ENCODE measurements at regions of chr11 and their contacts with region 1.

Region 1: DNA sequence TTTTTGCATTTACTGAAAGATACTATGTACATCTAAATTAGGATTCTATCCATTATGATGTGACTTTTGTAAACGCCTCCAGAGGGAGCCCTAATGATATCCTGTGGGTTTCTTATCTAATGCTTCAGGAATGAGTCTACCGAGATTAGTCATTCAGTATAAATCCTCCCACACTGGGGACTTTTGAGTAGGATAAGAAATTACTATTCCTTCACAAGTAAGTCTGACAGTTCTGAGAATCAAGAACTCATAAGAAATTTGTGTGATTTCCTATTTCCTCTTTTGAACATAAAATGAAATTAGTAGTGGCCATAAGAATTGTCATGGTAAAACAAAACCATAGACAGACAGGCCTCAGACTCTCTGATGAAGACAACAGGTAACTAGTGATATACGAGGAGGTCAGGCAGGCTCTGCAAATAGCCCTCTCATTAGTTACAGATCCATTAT is 10.0 kb upstream of the OR5M1 start:
- DNase-seq: no peak
- ATAC-seq: peak in 1 of 8 donors; percentile 70
- H3K4me3 ChIP-seq: no peak overlapping the region
- H3K27ac ChIP-seq: no peak overlapping the region
- H3K4me1 ChIP-seq: no peaks in the 10 kb centered on the region
- H3K27me3 ChIP-seq: peaks cover 0 to 2% (median 0%) of the 10 kb centered on the region in 7 donors
- CTCF ChIP-seq: peak in 7 of 9 donors; percentile 29 to 60 (median 48)

Region 2: DNA sequence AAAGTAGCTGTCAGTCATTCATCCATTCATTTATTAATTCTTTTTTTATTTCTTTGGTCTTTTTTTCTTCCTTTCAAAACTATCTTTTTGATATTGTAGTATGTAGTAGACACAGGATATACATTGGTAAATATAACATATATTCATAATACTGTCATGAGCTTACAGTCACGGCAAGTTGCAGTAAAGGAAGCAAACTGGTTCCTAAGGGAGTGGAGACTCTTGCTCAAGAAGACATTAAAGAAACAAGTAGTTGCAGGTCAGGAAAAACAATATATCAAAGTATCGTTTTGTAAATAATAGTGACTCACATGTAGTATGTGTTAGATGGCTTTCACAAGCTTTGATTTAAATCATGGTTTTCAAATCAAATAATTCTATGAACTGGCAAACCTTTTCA is 46.3 kb after region 1 on chr11:
- intact Hi-C with region 1: loop called in 1 of 10 experiments (anchors 5 kb)
- DNase-seq: no peak
- ATAC-seq: no peak
- H3K4me3 ChIP-seq: no peak overlapping the region
- H3K27ac ChIP-seq: no peak overlapping the region
- H3K4me1 ChIP-seq: no peaks in the 10 kb centered on the region
- H3K27me3 ChIP-seq: no peaks in the 10 kb centered on the region
- CTCF ChIP-seq: no peak

Region 3: GRCh38 chr11:56776809-56777208 is 152.1 kb after region 1 on chr11:
- intact Hi-C with region 1: loop called in 6 of 10 experiments (anchors 5 to 10 kb)
- DNase-seq: no peak
- ATAC-seq: no peak
- H3K4me3 ChIP-seq: no peak overlapping the region
- H3K27ac ChIP-seq: no peak overlapping the region
- H3K4me1 ChIP-seq: no peaks in the 10 kb centered on the region
- H3K27me3 ChIP-seq: peaks cover 0 to 5% (median 0%) of the 10 kb centered on the region in 7 donors
- CTCF ChIP-seq: no peak

Region 4: DNA sequence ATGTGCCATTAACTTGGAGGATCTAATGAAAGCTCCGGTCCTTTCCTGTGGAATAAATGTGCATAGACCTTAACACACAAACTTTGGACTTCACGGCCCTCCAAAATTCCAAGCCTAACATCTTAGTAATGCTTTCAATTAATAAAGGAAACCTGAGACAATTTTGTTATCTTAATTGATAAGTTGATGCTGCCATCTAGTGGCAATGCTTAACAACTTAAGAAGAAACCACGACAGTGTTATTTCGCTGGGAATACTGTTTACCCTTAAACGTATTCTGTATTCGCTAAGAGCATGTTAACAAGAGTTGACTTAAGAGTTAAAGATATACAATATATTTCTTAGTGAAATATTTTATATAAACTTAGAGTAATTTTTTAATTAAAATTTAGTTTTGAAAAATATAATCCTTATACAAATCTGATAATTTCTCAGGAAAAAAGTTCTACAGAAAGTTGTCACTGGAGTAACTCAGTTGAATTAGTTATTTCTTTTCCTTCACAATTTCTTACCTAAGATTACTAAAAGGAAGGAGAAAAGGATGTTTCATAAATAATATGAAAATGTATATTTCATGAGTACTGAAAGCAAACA is 158.9 kb after region 1 on chr11:
- intact Hi-C with region 1: loop called in 6 of 10 experiments (anchors 5 to 10 kb)
- DNase-seq: no peak
- ATAC-seq: no peak
- H3K4me3 ChIP-seq: no peak overlapping the region
- H3K27ac ChIP-seq: no peak overlapping the region
- H3K4me1 ChIP-seq: no peaks in the 10 kb centered on the region
- H3K27me3 ChIP-seq: peaks cover 0 to 5% (median 0%) of the 10 kb centered on the region in 7 donors
- CTCF ChIP-seq: peak in 8 of 9 donors; percentile 8 to 71 (median 62)